Tibial artery (tissue), 4 donors: ENCODE measurements at regions of chr7 and their contacts with region 1.

Region 1: GRCh38 chr7:55018361-55019190 is at the start of gene EGFR:
- DNase-seq: peak; percentile 80 to 95
- H3K4me3 ChIP-seq: peak within 1 kb of the TSS; percentile 73 to 84
- H3K27ac ChIP-seq: peak within 1 kb of the TSS; percentile 93 to 94
- H3K4me1 ChIP-seq: peaks cover 0 to 42% (median 25%) of the 10 kb centered on the region in 4 donors
- H3K27me3 ChIP-seq: no peaks in the 10 kb centered on the region
- CTCF ChIP-seq: no peak

Region 2: DNA sequence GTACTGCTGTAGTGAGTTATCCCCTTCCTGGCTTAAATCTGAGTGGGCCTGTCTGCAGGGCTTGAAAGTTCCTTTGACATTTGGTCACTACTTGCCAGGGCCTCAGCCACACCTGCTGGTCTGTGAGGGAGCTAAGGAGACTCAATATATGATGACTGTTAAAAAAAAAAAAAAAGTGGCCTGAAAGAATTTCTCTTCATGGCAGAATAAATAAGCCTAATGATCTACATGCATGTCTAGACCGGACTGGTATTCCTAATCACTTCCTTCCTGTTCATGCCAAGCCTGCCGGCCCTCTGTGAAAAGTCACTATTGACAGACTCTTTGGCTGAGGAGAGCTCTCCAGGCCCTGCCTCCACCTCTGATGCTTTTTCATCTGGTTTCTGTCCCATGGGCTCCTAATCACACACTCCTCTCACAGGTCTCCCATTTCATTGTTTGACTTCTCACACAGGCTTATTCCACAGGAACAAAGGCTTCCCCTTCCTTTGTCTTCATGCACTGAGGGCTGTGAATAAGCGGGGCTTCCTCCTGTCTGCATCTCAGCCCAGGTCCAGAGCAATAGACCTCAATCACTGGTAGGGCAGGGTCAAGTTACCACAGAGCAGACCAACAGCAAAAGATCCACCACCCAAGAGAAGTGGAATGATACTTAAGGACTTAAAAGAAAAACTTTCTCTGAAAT is 160.4 kb before region 1 on chr7:
- intact Hi-C with region 1: no loop called
- DNase-seq: no peak
- H3K4me3 ChIP-seq: no peak overlapping the region
- H3K27ac ChIP-seq: no peak overlapping the region
- H3K4me1 ChIP-seq: peaks cover 0 to 9% (median 0%) of the 10 kb centered on the region in 4 donors
- H3K27me3 ChIP-seq: no peaks in the 10 kb centered on the region
- CTCF ChIP-seq: no peak

Region 3: DNA sequence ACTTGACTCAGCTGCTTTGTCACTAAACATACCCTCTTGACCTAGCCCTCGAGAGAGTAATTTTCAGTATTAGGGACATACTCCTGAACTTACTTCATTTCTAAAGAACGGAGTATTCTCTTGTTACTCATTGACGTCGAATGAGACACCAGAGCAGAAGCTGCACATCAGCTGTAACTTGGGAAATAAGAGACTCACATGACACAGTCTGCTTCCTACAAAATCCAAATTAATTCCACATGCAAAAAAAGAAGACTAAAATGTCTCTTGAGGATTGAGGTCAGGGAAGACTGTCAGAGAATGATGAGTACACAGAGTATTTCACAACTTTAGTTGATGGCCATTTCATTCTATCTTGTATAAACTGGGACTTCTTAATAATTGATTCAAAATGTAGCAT is 114.4 kb before region 1 on chr7:
- intact Hi-C with region 1: no loop called
- DNase-seq: peak in 1 of 2 donors; percentile 32
- H3K4me3 ChIP-seq: no peak overlapping the region
- H3K27ac ChIP-seq: no peak overlapping the region
- H3K4me1 ChIP-seq: no peaks in the 10 kb centered on the region
- H3K27me3 ChIP-seq: no peaks in the 10 kb centered on the region
- CTCF ChIP-seq: no peak

Region 4: GRCh38 chr7:55065079-55065478 is 46.5 kb after region 1 on chr7:
- intact Hi-C with region 1: loop called (anchors 5 kb)
- DNase-seq: peak in 1 of 2 donors; percentile 58
- H3K4me3 ChIP-seq: no peak overlapping the region
- H3K27ac ChIP-seq: peak overlapping the region; percentile 37 to 76
- H3K4me1 ChIP-seq: peaks cover 0 to 61% (median 38%) of the 10 kb centered on the region in 4 donors
- H3K27me3 ChIP-seq: no peaks in the 10 kb centered on the region
- CTCF ChIP-seq: no peak

Region 5: GRCh38 chr7:55132890-55133551 is 114.4 kb after region 1 on chr7:
- intact Hi-C with region 1: loop called (anchors 5 kb)
- DNase-seq: peak; percentile 64 to 81
- H3K4me3 ChIP-seq: no peak overlapping the region
- H3K27ac ChIP-seq: peak overlapping the region; percentile 63 to 85
- H3K4me1 ChIP-seq: peaks cover 0 to 65% (median 58%) of the 10 kb centered on the region in 4 donors
- H3K27me3 ChIP-seq: no peaks in the 10 kb centered on the region
- CTCF ChIP-seq: no peak

Region 6: DNA sequence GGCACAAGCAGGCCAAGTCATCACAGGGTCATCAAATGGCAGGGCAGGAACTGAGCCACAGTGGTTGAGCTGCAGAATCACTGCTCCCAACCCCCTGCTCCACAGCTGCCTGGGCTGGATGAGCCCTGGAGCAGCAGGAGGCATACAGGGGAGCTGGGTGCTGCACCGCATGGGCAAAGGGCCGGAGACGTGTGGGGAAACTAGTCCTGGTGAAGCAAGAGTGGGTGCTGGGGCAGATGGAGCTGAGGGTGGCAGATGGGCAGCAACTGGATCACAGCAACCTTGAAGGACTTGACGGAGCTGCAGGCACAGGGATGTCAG is 569.8 kb after region 1 on chr7:
- intact Hi-C with region 1: no loop called
- DNase-seq: no peak
- H3K4me3 ChIP-seq: no peak overlapping the region
- H3K27ac ChIP-seq: no peak overlapping the region
- H3K4me1 ChIP-seq: peaks cover 0 to 6% (median 1%) of the 10 kb centered on the region in 4 donors
- H3K27me3 ChIP-seq: peaks cover 0 to 16% of the 10 kb centered on the region in 2 donors
- CTCF ChIP-seq: no peak